GM10248 (cell line): ENCODE measurements at regions of chr13 and their contacts with region 1.

Region 1: GRCh38 chr13:51599444-51600176 is 15.3 kb downstream of the WDFY2 start:
- DNase-seq: no peak
- CTCF ChIP-seq: no peak

Region 2: DNA sequence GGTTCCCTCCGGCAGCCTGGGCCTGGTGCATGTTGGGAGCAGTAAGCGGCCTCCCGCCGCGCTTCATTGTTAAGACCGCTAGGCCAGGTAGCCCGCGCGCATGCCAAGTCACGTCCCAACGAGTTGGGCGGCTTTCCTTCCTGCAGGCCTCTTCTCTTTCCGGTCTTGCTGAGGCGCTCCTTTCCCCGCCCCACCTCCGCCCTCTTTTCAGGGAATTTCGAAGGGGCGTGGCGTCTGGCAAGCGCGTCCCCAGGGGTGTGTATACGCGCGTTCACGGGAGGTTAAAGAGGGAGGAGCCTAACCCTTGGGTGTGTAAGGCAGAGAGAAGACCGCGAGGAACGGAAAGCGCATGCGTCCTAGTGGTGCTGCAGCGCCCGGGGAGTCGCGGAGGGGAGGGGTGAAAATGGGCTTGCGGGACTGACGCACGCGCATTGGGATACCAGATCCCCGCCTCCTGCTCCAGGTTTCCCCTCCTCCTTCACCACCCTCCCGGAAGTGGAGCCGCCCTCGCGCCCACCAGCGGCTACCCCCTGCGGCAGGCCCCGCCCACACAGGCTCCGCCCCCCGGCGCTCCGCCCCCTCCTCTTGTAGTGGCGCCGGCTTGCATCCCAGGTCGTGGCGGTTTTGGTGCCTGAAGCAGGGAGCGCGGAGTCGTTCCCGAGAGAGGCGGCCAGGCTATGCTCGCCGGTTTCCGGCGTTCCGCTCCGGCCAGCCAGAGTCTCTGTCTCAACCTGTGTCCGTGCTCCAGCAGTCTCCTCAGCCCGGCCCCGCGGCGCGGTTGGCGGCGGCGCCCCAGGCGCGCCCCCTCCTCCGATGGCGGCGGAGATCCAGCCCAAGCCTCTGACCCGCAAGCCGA is 15.5 kb before region 1 on chr13 and contains the start of gene WDFY2:
- CTCF ChIA-PET with region 1: interaction called, 15 read pairs
- POLR2A ChIA-PET with region 1: interaction called, 3 read pairs
- DNase-seq: peak; percentile 97
- CTCF ChIP-seq: no peak

Region 3: GRCh38 chr13:51614350-51614786 is 14.8 kb after region 1 on chr13:
- CTCF ChIA-PET with region 1: interaction called, 19 read pairs
- POLR2A ChIA-PET with region 1: no interaction called
- DNase-seq: peak; percentile 48
- CTCF ChIP-seq: no peak